ENCODE measurements at regions of chr17 and their contacts with region 1.

Region 1: DNA sequence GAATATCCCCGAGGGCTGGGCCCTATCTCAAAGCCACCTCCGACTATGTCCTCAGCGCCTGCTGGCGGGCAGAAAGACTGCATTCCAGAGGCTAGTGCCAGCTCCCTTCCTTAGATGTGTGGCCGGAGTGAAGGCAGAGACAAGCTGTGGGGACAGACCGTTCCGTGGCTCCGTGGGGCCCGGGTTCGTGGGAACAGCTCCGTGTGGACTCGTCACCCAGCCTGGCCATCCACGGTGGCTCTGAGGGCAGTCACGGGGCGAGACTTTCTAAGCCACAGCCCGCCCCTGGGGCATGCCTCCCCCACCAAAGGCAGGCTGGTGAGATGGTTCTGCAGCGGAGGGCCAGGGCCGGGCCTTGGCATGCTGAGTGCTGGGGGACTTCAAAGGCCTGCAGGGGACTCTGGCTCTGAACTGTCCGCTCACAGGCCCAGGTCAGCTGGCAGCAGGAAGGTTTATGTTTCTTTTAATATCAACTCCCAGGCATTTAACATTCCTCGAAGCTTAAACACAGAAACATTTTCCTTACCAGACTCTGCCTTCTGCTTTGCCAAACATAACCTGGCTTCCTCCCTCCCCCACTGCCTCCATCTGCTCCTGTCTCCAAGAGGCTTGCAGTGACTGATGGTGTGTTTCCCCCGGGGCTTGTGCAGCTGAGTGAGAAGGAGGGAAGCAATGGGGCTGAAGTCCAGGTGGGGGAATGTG is 50.4 kb downstream of the TIMM22 start:
- DNase-seq: peak; percentile 72
- ATAC-seq: peak; percentile 13 to 81 (median 66)
- H3K4me3 ChIP-seq: no peak overlapping the region
- H3K27ac ChIP-seq: peak overlapping the region; percentile 42 to 95 (median 83)
- H3K4me1 ChIP-seq: peaks cover 10 to 66% (median 49%) of the 10 kb centered on the region in 9 donors
- H3K27me3 ChIP-seq: no peaks in the 10 kb centered on the region
- CTCF ChIP-seq: peak in 4 of 9 donors; percentile 19 to 37 (median 28)

Region 2: GRCh38 chr17:1005361-1005946 is 41.9 kb before region 1 on chr17:
- intact Hi-C with region 1: loop called in 6 of 10 experiments (anchors 5 kb)
- DNase-seq: peak; percentile 65 to 72
- ATAC-seq: peak in 7 of 8 donors; percentile 16 to 53 (median 49)
- H3K4me3 ChIP-seq: no peak overlapping the region
- H3K27ac ChIP-seq: peak overlapping the region; percentile 9 to 90 (median 78)
- H3K4me1 ChIP-seq: peaks cover 55 to 96% (median 88%) of the 10 kb centered on the region in 9 donors
- H3K27me3 ChIP-seq: no peaks in the 10 kb centered on the region
- CTCF ChIP-seq: no peak

Region 3: DNA sequence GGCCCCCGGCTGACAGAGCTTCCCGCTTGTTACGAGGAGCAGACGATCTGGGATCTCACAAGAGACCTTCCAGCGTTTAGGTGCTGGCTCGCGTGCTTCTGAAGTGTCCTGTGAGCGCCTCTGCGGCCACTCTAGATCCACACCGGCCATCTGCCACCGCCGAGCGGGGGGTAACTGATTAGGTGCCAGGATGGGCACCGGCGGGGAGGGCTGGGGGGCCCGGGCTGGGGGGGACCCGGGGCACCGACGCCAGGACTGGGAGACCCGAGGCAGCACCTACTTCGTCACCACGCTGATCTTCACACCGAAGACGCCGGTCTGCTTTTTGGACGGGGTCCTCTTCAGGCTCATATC is 34.9 kb before region 1 on chr17:
- intact Hi-C with region 1: loop called in 2 of 10 experiments (anchors 5 kb)
- DNase-seq: no peak
- ATAC-seq: no peak
- H3K4me3 ChIP-seq: no peak overlapping the region
- H3K27ac ChIP-seq: peak overlapping the region in 1 of 10 donors; percentile 11
- H3K4me1 ChIP-seq: peaks cover 12 to 59% (median 34%) of the 10 kb centered on the region in 9 donors
- H3K27me3 ChIP-seq: no peaks in the 10 kb centered on the region
- CTCF ChIP-seq: no peak

Region 4: DNA sequence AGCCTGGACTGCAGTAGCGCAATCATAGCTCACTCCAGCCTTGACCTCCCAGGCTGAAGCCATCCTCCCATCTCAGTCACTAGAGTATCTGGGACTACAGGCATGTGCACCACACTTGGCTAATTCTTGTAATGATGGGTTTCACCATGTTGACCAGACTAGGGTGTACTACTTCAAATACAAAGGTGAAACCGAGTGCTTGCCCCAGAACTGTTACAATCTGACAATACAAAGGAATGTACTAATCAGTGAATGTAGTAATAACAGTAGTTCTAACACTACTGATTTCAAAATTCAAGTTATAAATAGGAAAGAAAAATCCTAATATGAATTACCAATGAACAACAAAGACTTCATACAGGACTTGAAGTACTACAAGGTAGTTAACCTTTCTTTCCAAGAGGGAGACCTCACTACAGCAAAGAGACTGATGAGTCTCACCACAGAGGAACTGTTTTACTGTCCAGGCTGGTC is 384.3 kb after region 1 on chr17:
- intact Hi-C with region 1: no loop called
- DNase-seq: no peak
- ATAC-seq: peak in 1 of 8 donors; percentile 28
- H3K4me3 ChIP-seq: no peak overlapping the region
- H3K27ac ChIP-seq: peak overlapping the region in 1 of 10 donors; percentile 22
- H3K4me1 ChIP-seq: peaks cover 0 to 48% (median 30%) of the 10 kb centered on the region in 9 donors
- H3K27me3 ChIP-seq: no peaks in the 10 kb centered on the region
- CTCF ChIP-seq: no peak